ENCODE measurements at regions of chr7 and their contacts with region 1.

Region 1: DNA sequence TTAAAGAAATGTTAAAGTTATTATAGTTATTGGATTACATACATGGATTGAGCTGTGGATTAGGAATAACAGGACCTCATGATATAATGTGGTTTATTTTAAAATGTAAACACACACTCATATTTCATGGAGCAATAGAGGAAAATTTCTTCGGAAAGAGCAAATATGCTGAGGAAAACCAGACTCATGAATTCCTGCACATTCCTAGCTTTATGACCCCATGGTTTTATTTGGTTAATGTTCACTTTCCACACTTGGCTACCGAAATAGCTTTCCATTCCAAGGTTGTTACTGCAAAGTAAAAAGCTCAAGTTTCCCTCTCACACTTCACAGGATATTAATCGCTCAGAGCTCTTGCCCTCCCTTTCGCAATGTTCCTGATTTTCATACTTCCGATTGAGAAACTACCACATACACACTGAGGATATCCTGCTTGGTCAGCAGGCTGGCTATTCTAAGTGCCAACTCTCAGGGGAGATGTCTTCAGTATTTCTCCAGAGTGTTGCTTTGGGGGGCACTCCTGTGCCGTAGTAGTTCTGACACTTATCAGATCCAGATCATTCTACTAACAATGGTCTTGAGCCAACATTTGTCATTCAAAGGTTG is 77.5 kb upstream of the STEAP1B start:
- DNase-seq: peak in 1 of 2 donors; percentile 59
- ATAC-seq: peak; percentile 92
- H3K4me3 ChIP-seq: no peak overlapping the region
- H3K27ac ChIP-seq: peak overlapping the region; percentile 49 to 85
- H3K4me1 ChIP-seq: peaks cover 0 to 4% of the 10 kb centered on the region in 2 donors
- H3K27me3 ChIP-seq: no peaks in the 10 kb centered on the region

Region 2: GRCh38 chr7:22488643-22489462 is 88.6 kb before region 1 on chr7:
- intact Hi-C with region 1: no loop called
- DNase-seq: no peak
- ATAC-seq: peak; percentile 83
- H3K4me3 ChIP-seq: no peak overlapping the region
- H3K27ac ChIP-seq: no peak overlapping the region
- H3K4me1 ChIP-seq: no peaks in the 10 kb centered on the region
- H3K27me3 ChIP-seq: no peaks in the 10 kb centered on the region

Region 3: GRCh38 chr7:22726345-22727185 is 149.1 kb after region 1 on chr7:
- intact Hi-C with region 1: loop called (anchors 5 kb)
- DNase-seq: peak in 1 of 2 donors; percentile 61
- ATAC-seq: peak; percentile 80
- H3K4me3 ChIP-seq: peak overlapping the region in 1 of 2 donors; percentile 15
- H3K27ac ChIP-seq: peak overlapping the region in 1 of 2 donors; percentile 0
- H3K4me1 ChIP-seq: no peaks in the 10 kb centered on the region
- H3K27me3 ChIP-seq: no peaks in the 10 kb centered on the region

Region 4: DNA sequence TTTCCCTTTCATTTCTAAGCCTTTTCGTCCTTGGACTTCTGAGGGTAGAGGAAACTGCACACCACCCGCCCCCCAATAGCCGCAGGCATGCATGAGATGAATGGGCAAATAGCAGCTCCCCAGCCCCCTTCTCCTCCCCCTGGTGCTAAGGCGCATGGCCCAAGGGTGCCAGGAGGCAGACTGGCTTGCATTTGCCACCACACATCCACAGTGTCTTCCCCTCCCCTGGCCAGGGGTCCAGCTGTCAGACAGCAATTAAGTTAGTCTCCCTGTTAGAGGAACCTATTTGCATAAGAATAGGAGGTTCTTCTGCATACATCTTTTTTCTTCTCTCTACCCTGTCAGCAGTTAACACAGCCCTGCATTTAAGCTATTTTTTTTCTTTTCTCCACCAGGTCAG is 224.9 kb after region 1 on chr7:
- intact Hi-C with region 1: no loop called
- DNase-seq: no peak
- ATAC-seq: no peak
- H3K4me3 ChIP-seq: no peak overlapping the region
- H3K27ac ChIP-seq: no peak overlapping the region
- H3K4me1 ChIP-seq: no peaks in the 10 kb centered on the region
- H3K27me3 ChIP-seq: no peaks in the 10 kb centered on the region

Region 5: GRCh38 chr7:23072048-23072447 is 494.5 kb after region 1 on chr7:
- intact Hi-C with region 1: no loop called
- DNase-seq: no peak
- ATAC-seq: no peak
- H3K4me3 ChIP-seq: no peak overlapping the region
- H3K27ac ChIP-seq: no peak overlapping the region
- H3K4me1 ChIP-seq: peaks cover 0 to 8% of the 10 kb centered on the region in 2 donors
- H3K27me3 ChIP-seq: no peaks in the 10 kb centered on the region

Measured in aorta (tissue), 5 donors.